Dendritic cell treated with granulocyte-macrophage colony-stimulating factor and Interleukin-4, amounts not matched to agents 40 ng/mL and 50 ng/mL, for 4 days (primary cell): ENCODE measurements at regions of chr1 and their contacts with region 1.

Region 1: DNA sequence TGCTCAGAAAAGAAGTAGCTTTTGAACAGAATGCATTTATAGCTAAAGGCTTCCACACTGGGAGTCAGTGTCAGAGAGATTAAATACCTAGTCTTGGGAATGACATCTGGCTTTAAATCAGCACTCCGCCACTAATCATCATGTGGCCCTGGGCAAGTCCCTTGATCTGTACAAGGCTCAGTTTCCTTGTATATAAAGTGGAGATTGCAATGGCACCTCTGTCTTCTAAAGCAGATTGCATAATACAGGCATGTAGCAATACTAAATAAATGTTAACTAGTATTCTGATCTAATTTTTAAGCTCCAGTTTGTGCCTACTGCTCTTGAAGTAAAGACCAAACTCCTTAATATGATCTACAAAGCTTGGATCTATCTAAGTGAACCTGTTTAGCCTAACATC is 249.4 kb downstream of the PLPP3 start:
- H3K4me3 Mint-ChIP-seq: no peak overlapping the region
- H3K27ac Mint-ChIP-seq: peak overlapping the region; percentile 36
- H3K4me1 Mint-ChIP-seq: peaks cover 34% of the 10 kb centered on the region
- H3K27me3 Mint-ChIP-seq: peaks cover 2% of the 10 kb centered on the region

Region 2: GRCh38 chr1:56229186-56229585 is 100.8 kb before region 1 on chr1:
- intact Hi-C with region 1: loop called (anchors 10 kb)
- H3K4me3 Mint-ChIP-seq: no peak overlapping the region
- H3K27ac Mint-ChIP-seq: no peak overlapping the region
- H3K4me1 Mint-ChIP-seq: peaks cover 43% of the 10 kb centered on the region
- H3K27me3 Mint-ChIP-seq: peaks cover 13% of the 10 kb centered on the region

Region 3: DNA sequence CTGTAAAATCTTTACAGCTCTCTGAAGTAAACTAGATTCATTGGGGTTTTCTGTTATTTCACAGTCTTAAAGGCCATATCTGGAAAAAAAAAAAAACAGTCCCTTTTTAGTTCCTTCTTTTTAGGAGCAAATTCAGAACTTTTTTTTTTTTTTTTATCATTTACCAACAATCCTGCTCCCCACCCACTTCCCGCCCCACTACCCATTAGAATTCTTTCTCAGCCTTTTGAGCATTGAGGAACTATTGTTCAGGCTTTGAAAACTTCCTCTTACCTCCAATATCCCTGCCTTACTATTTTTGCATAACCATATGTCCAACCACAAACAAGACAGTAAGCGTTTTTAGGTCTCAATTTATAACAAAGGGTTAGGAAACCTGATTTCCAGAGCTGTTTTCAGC is 80.7 kb before region 1 on chr1:
- intact Hi-C with region 1: no loop called
- H3K4me3 Mint-ChIP-seq: no peak overlapping the region
- H3K27ac Mint-ChIP-seq: no peak overlapping the region
- H3K4me1 Mint-ChIP-seq: peaks cover 5% of the 10 kb centered on the region
- H3K27me3 Mint-ChIP-seq: no peaks in the 10 kb centered on the region

Region 4: DNA sequence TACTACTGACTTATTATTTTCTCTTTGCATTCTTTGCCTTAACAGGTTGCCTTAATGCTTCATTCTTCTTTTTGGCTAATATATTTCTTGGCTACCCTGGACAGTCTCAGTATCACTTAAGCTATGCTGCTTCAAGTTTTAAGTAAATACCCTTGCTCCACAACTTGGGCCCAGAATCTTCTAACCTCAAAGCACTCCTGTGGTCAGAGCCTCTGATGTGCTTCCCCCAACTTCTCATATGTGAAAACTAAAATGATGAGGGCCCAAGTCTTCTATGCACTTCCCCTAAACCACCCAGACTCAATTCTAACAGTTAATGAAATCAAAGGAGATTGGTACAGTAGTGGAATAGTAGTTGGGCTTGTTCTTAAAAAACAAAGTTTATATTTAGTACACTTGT is 64.7 kb before region 1 on chr1:
- intact Hi-C with region 1: loop called (anchors 10 kb)
- H3K4me3 Mint-ChIP-seq: no peak overlapping the region
- H3K27ac Mint-ChIP-seq: no peak overlapping the region
- H3K4me1 Mint-ChIP-seq: peaks cover 38% of the 10 kb centered on the region
- H3K27me3 Mint-ChIP-seq: peaks cover 30% of the 10 kb centered on the region

Region 5: DNA sequence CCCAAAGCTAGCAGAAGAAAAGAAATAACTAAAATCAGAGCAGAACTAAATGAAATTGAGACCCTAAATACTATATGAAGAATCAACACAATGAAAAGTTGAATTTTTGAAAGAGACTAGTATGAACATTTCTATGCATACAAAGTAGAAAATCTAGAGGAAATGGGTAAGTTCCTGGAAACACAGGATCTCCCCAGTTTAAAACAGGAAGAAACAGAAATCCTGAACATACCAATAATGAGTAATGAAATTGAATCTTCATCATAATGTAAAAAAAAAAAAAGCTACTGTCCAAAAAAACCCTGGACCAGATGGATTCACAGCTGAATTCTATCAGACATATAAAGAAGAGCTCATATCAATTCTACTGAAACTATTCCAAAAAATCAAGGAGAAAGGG is 15.9 kb after region 1 on chr1:
- intact Hi-C with region 1: no loop called
- H3K4me3 Mint-ChIP-seq: no peak overlapping the region
- H3K27ac Mint-ChIP-seq: no peak overlapping the region
- H3K4me1 Mint-ChIP-seq: peaks cover 16% of the 10 kb centered on the region
- H3K27me3 Mint-ChIP-seq: peaks cover 8% of the 10 kb centered on the region

Region 6: GRCh38 chr1:56578963-56579875 is 249.3 kb after region 1 on chr1 and contains the start of gene PLPP3:
- intact Hi-C with region 1: loop called (anchors 10 kb)
- H3K4me3 Mint-ChIP-seq: peak within 1 kb of the TSS; percentile 95
- H3K27ac Mint-ChIP-seq: peak within 1 kb of the TSS; percentile 84
- H3K4me1 Mint-ChIP-seq: peaks cover 22% of the 10 kb centered on the region
- H3K27me3 Mint-ChIP-seq: peaks cover 20% of the 10 kb centered on the region

Region 7: GRCh38 chr1:58324558-58324957 is 1994.6 kb after region 1 on chr1:
- intact Hi-C with region 1: no loop called
- H3K4me3 Mint-ChIP-seq: no peak overlapping the region
- H3K27ac Mint-ChIP-seq: no peak overlapping the region
- H3K4me1 Mint-ChIP-seq: no peaks in the 10 kb centered on the region
- H3K27me3 Mint-ChIP-seq: no peaks in the 10 kb centered on the region